Activated CD4-positive, alpha-beta memory T cell treated with anti-CD3 and anti-CD28 coated beads, Interleukin-2, amount 10 ng/mL, durations not matched to agents 7 days and 5 days (primary cell): ENCODE measurements at regions of chr19 and their contacts with region 1.

Region 1: GRCh38 chr19:34171877-34172660 is at the start of gene LSM14A:
- DNase-seq: peak; percentile 93
- H3K4me3 Mint-ChIP-seq: peak within 1 kb of the TSS; percentile 92
- H3K27ac Mint-ChIP-seq: peak within 1 kb of the TSS; percentile 98
- H3K4me1 Mint-ChIP-seq: peaks cover 39% of the 10 kb centered on the region
- H3K27me3 Mint-ChIP-seq: no peaks in the 10 kb centered on the region
- total RNA-seq, gene LSM14A: 120 to 129 TPM

Region 2: DNA sequence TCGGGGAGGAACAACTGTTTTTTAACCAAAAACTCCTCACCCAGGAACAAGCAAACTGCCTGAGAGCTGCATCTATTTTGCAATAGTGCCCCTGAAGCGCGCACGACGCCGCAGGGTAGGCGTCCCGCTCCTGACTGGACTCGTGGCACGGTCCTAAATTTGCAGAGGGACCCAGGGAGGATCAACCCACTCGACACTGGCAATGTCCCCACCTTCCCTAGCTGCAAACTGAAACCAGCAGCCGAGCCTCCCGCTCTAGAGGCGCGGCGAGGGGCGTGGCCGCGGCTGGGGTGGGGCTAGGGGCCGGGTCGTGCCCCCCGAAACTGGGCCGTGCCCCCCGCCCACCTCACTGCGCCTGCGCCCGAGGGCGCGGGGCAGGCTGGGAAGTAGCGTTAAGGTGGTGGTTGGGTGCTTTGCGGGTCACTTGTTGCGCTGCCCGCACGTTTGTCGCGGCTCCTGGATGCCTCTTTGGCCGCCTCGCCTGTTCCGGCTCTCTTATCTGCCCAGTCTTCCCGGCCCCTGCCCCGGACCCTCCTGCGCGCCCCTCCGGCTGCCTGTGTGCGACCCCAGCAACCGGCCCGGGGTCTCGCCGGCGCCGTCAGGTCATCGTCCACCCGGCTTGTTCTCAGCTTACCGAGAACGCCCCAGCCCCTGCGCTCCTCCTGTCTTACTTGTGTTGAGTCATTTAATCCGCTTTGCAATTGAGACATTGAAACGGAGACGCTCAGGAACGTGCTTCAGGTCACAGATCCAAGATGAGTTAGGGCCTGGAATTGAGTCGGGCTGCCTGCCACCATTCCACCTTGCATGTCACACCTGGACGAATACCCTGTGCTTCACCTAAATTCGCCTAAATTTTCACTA is 37.6 kb before region 1 on chr19:
- CTCF ChIA-PET with region 1: no interaction called
- POLR2A ChIA-PET with region 1: interaction called, 24 read pairs
- DNase-seq: peak; percentile 92
- H3K4me3 Mint-ChIP-seq: peak overlapping the region; percentile 89
- H3K27ac Mint-ChIP-seq: peak overlapping the region; percentile 85
- H3K4me1 Mint-ChIP-seq: peaks cover 12% of the 10 kb centered on the region
- H3K27me3 Mint-ChIP-seq: no peaks in the 10 kb centered on the region

Region 3: GRCh38 chr19:34188408-34188807 is 16.3 kb after region 1 on chr19:
- CTCF ChIA-PET with region 1: no interaction called
- POLR2A ChIA-PET with region 1: interaction called, 12 read pairs
- DNase-seq: no peak
- H3K4me3 Mint-ChIP-seq: no peak overlapping the region
- H3K27ac Mint-ChIP-seq: no peak overlapping the region
- H3K4me1 Mint-ChIP-seq: peaks cover 42% of the 10 kb centered on the region
- H3K27me3 Mint-ChIP-seq: no peaks in the 10 kb centered on the region

Region 4: DNA sequence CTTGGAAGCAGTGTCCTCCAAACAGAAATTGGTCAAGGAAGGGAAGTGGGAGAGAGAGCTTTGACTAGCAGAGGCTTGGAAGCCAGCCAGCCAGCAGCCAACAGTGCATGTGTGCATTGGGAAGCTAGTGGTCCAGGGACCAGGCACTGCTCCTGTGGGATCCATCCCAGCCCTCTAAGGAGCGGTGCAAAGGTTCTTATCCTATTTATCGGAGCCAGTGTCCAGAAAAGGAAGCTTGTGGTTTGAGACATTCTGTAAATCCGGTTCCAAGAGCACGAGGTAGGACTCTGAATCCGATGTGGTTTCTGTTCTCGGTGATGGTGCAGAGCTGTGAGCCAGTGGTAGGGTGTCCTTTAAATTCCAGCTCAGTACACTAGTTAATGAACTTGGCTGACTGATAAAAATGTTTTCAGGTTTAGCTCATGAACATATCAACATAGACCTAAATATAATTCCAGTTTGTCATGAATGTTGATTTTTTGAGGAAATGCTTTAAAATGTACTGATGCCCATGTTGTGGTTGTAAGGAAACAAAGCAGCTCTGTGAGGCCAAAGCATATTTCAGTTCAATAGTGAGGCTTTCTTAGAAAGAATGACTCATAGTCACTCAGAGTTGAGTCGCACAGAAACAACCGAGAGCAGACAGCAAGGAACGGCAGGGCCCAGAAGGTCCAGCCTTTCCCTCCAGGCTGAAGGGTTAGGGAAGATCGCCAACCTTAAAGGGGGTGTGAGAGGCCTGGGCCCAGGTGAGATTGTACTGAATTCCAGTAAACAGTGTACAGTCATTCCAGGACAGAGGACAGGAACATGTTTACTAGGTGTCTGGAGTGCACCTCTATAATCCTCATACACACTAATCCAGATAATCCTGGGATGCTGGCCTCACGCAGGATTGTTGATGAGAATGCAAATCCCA is 60.8 kb after region 1 on chr19:
- CTCF ChIA-PET with region 1: interaction called, 5 read pairs
- POLR2A ChIA-PET with region 1: interaction called, 18 read pairs
- DNase-seq: peak; percentile 35
- H3K4me3 Mint-ChIP-seq: peak overlapping the region; percentile 58
- H3K27ac Mint-ChIP-seq: peak overlapping the region; percentile 85
- H3K4me1 Mint-ChIP-seq: peaks cover 48% of the 10 kb centered on the region
- H3K27me3 Mint-ChIP-seq: no peaks in the 10 kb centered on the region

Region 5: DNA sequence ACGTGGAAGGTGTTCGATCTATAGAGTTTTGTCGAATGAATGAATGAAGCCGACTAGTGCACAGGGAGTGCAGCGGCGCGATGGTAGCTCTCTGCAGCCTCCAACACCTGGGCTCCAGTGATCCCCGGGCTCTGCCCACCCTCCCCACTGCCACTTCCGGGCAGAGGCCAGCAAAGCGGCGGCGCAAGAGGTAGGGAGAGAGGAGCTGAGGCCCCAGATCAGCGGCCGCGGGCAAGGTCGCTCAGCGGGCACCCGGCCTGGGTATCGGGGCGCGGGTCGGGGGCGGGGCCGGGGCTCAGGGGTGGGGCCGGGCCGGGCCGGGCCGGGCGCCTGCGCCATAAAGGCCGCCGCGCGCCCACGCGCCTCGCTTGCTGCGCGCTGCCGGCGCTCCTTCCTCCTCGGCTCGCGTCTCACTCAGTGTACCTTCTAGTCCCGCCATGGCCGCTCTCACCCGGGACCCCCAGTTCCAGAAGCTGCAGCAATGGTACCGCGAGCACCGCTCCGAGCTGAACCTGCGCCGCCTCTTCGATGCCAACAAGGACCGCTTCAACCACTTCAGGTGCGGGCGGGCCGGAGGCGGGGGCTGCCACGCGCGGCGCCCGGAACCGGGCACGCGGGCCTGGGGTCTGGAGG is 192.9 kb after region 1 on chr19 and contains the start of gene GPI:
- CTCF ChIA-PET with region 1: interaction called, 5 read pairs
- POLR2A ChIA-PET with region 1: interaction called, 19 read pairs
- DNase-seq: peak; percentile 74
- H3K4me3 Mint-ChIP-seq: peak within 1 kb of the TSS; percentile 95
- H3K27ac Mint-ChIP-seq: peak within 1 kb of the TSS; percentile 88
- H3K4me1 Mint-ChIP-seq: peaks cover 67% of the 10 kb centered on the region
- H3K27me3 Mint-ChIP-seq: no peaks in the 10 kb centered on the region
- total RNA-seq, gene GPI: 658 to 662 TPM